Activated naive CD4-positive, alpha-beta T cell treated with anti-CD3 and anti-CD28 coated beads, Interleukin-2, amount 10 ng/mL, durations not matched to agents 7 days and 5 days (primary cell): ENCODE measurements at regions of chr6 and their contacts with region 1.

Region 1: DNA sequence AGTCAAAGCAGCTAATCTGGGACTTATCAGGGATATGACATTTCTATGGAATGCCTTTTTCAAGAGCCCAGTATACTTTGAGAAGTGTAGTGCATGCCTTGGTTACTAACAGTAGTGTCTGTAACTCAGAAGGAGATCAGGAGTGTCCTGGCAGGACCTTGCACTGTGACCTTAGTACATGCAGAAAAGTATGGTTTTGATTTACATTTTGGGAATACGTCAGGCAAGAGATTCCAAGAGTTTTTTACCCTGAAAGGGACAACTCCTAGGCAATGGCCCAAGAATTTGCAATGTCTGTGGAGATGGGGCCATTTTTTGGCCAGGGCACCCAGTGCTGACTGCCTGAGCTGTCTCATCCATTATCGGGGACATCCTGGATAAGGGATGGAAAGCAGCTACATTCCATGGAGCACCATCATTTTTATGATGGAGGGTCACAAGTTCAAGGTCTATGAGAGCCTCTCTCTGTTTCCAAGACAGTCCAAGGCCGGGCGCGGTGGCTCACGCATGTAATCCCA is 80.2 kb downstream of the FAM50B start:
- DNase-seq: no peak
- H3K4me3 Mint-ChIP-seq: no peak overlapping the region
- H3K27ac Mint-ChIP-seq: no peak overlapping the region
- H3K4me1 Mint-ChIP-seq: no peaks in the 10 kb centered on the region
- H3K27me3 Mint-ChIP-seq: peaks cover 30% of the 10 kb centered on the region

Region 2: DNA sequence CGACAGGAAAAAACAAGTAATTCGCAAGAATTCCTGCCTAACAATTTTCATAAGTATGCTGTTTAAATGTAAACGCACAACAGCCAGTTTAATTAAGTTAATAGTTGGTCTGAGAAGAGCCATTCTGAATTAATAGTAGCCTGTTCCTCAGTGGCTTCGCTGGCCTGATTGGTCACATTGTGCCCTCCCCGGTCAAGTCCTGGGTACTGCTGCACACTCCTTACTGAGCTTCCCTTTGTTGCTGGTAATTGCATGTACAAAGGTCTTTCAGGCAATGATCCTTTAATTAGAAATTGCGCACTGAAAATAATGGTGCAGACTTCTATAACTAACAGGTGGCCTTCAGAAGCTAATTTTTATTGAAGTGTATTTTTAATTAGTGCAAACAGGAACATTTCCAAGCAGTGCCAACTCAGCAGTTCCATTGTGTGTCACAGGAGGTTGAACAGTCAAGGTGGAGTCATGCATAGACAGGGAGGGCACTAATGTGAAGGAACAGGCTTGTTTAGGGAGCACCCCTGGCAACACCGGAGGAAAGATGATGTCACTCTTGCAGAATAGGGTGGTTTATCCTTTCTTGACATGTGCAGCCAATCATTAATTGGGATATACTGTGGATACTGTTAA is 379.9 kb before region 1 on chr6:
- CTCF ChIA-PET with region 1: no interaction called
- DNase-seq: no peak
- H3K4me3 Mint-ChIP-seq: no peak overlapping the region
- H3K27ac Mint-ChIP-seq: no peak overlapping the region
- H3K4me1 Mint-ChIP-seq: no peaks in the 10 kb centered on the region
- H3K27me3 Mint-ChIP-seq: peaks cover 18% of the 10 kb centered on the region

Region 3: GRCh38 chr6:3742426-3743344 is 186.7 kb before region 1 on chr6:
- CTCF ChIA-PET with region 1: interaction called, 22 read pairs
- DNase-seq: peak; percentile 89
- H3K4me3 Mint-ChIP-seq: no peak overlapping the region
- H3K27ac Mint-ChIP-seq: peak overlapping the region; percentile 49
- H3K4me1 Mint-ChIP-seq: peaks cover 13% of the 10 kb centered on the region
- H3K27me3 Mint-ChIP-seq: peaks cover 53% of the 10 kb centered on the region

Region 4: DNA sequence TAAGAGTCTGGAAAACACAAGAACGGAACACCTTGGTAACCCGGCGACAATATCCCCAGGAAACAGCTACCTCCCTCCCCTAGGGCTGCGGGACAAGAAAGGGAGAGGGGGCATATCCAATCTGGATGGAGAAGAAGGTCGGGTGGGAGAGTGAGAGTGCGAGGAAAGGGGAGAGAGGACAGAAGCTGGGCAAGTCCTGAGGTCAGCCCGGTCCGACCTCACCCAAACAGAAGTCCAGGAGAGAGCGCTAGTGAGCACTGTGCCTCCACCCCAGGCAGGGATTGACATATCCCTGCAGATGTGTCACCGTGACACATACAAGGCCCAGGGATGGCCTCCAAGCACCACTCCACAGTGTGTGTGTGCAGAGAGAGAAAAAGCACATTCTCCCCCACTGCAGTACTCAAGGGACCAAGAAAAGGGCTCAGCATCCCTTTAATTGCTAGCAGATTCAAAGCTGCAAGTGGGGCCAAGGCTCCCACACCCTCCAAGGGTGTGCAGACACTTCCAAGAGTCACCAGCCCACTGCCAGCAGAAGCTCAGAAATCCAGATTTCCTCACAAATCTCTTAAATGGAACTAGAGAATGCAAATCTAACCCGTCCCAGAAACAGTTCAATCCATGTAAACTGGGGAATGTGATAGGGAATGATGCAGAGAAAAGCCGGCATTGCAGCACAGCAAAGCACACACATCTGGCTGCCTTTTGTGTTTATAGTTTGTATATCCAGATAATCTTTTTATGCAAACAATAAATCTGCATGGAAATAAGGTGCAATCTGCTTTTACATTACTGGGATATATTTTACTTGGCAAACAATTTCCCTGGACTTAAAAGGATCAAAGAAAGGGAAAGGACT is 180.9 kb before region 1 on chr6:
- CTCF ChIA-PET with region 1: interaction called, 22 read pairs
- DNase-seq: peak; percentile 61
- H3K4me3 Mint-ChIP-seq: no peak overlapping the region
- H3K27ac Mint-ChIP-seq: no peak overlapping the region
- H3K4me1 Mint-ChIP-seq: peaks cover 6% of the 10 kb centered on the region
- H3K27me3 Mint-ChIP-seq: peaks cover 82% of the 10 kb centered on the region

Region 5: GRCh38 chr6:3848925-3849605 is 80.3 kb before region 1 on chr6 and contains the start of gene FAM50B:
- CTCF ChIA-PET with region 1: interaction called, 37 read pairs
- DNase-seq: peak; percentile 94
- H3K4me3 Mint-ChIP-seq: peak within 1 kb of the TSS; percentile 76
- H3K27ac Mint-ChIP-seq: peak within 1 kb of the TSS; percentile 73
- H3K4me1 Mint-ChIP-seq: peaks cover 25% of the 10 kb centered on the region
- H3K27me3 Mint-ChIP-seq: no peaks in the 10 kb centered on the region

Region 6: DNA sequence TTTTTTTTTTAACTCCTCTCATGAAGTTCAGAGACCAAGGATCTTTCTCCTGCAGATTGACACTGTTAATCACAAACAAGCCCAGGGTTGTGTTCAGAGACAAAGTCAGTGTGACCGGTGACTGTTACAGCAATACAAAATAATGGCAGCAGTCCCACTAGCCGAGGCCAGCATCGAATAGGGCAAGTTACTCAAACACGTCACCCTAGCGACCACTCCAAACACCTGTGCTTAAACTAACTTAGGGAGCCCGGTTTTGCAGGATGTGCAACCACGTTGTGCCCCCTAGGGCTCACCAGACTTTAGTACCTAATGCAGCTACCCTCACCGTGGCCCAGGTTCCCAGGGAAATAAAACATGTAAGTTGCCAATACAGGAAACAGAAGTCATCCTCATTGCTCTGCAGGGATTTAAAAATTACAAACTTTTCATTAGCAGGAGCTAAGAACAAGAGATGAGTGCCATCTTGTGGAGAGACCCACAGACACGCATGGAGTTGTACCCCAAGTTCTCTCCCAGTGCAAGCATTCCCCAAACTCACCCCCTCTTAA is 42.1 kb before region 1 on chr6:
- CTCF ChIA-PET with region 1: interaction called, 12 read pairs
- DNase-seq: no peak
- H3K4me3 Mint-ChIP-seq: no peak overlapping the region
- H3K27ac Mint-ChIP-seq: no peak overlapping the region
- H3K4me1 Mint-ChIP-seq: no peaks in the 10 kb centered on the region
- H3K27me3 Mint-ChIP-seq: peaks cover 27% of the 10 kb centered on the region